GM12878 (cell line): ENCODE measurements at regions of chrX and their contacts with region 1.

Region 1: DNA sequence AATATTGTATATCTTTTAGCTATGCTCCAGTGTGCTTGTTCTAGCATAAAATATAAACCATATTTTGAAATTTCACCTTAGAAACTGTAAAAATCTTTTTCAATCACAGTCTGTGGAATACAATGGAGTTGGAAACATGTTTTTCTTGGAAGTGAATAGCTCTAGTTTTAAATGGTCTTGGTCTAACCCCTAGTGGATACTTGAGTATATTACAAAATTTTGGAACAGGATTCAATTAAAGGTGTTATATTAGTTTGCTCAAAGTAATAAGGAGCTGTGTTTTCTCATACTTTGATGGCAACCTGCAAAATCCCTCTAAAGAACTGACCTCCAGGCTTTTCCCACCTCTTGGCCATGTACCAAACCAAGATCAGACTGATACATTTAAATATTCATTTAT is 48.2 kb downstream of the STK26 start:
- DNase-seq: no peak
- ATAC-seq: peak; percentile 54
- H3K4me3 ChIP-seq: no peak overlapping the region
- H3K27ac ChIP-seq: no peak overlapping the region
- H3K4me1 ChIP-seq: no peaks in the 10 kb centered on the region
- H3K27me3 ChIP-seq: no peaks in the 10 kb centered on the region
- CTCF ChIP-seq: peak in 1 of 3 experiments; percentile 15; a peak in 2 of 6 replicates
- EP300 ChIP-seq: no peak
- POLR2A ChIP-seq: no peak
- RAD21 ChIP-seq: peak; percentile 52

Region 2: DNA sequence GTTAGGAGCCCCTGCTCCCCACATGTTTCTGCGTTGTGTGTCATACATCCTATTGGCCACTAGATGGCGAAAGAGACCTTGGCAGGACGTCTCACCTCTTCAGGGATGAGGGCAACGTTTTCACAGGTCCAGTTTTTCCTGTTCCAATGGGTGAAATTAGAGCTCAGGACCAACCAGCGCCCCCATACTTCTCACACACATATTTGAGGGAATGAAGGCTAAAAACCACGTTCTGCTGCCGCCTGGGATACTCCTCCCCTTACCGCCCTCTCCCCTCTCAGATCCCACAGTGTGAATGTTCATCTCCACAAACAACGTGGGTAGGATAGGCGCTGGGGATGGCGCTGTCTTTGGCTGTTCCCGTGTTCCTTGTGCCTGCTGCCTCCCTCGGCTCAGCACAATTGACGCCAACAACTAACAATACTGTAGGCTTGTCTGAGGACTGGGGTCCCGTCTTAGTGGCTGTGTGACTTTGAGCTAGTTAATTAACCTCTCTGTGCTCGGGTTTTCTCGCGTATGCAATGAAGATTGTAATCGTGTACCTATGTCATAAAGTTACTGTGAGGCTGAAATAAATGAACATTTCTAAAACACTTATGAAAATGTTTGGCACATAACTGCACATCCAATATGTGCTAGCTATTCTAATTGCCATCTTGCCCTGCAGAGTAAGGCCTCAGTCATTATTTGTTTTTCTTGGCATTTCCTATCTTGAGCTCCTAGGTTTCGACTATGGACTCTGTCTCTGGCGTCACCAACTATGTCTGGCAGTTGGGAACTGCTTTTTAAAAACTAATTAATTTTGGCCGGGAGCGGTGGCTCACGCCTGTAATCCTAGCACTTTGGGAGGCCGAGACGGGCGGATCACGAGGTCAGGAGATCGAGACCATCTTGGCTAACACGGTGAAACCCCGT is 229.5 kb before region 1 on chrX:
- CTCF ChIA-PET with region 1: interaction called, 11 read pairs
- POLR2A ChIA-PET with region 1: no interaction called
- RAD21 ChIA-PET with region 1: interaction called, 5 read pairs
- SMC1A ChIA-PET with region 1: interaction called, 5 read pairs
- in situ Hi-C with region 1: no loop called
- intact Hi-C with region 1: loop called (anchors 1 kb)
- DNase-seq: no peak
- ATAC-seq: peak; percentile 98
- H3K4me3 ChIP-seq: no peak overlapping the region
- H3K27ac ChIP-seq: no peak overlapping the region
- H3K4me1 ChIP-seq: no peaks in the 10 kb centered on the region
- H3K27me3 ChIP-seq: no peaks in the 10 kb centered on the region
- CTCF ChIP-seq: peak; percentile 85 to 90 (median 88)
- EP300 ChIP-seq: no peak
- POLR2A ChIP-seq: no peak
- RAD21 ChIP-seq: peak; percentile 96

Region 3: DNA sequence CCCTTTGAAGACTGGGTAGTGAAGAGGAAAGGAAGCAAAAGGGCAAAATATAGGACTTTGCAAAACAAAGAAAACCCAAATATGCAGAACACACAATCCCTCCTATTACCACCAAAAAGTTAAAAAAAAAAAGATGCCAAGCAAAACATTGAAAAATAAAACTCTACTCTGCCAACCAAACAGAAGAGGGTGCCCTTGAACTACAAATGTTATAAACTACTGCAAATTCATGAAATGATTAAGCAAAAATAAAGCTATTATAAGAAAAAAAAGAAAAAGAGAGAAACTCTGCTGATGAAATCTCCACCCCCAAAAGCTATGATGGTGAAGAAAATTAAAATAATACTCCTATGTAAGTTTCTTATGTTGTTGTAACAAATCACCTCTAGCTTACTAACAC is 216.7 kb before region 1 on chrX:
- CTCF ChIA-PET with region 1: interaction called, 5 read pairs
- POLR2A ChIA-PET with region 1: no interaction called
- RAD21 ChIA-PET with region 1: interaction called, 14 read pairs
- SMC1A ChIA-PET with region 1: interaction called, 6 read pairs
- in situ Hi-C with region 1: loop called (anchors 10 kb)
- intact Hi-C with region 1: no loop called
- DNase-seq: no peak
- ATAC-seq: no peak
- H3K4me3 ChIP-seq: no peak overlapping the region
- H3K27ac ChIP-seq: no peak overlapping the region
- H3K4me1 ChIP-seq: no peaks in the 10 kb centered on the region
- H3K27me3 ChIP-seq: no peaks in the 10 kb centered on the region
- CTCF ChIP-seq: peak; percentile 6 to 31 (median 10); a peak in 2 of 6 replicates
- EP300 ChIP-seq: no peak
- POLR2A ChIP-seq: no peak
- RAD21 ChIP-seq: peak; percentile 51

Region 4: GRCh38 chrX:132022967-132023895 is 48.0 kb before region 1 on chrX and contains the start of gene STK26:
- CTCF ChIA-PET with region 1: interaction called, 14 read pairs
- POLR2A ChIA-PET with region 1: no interaction called
- RAD21 ChIA-PET with region 1: interaction called, 6 read pairs
- SMC1A ChIA-PET with region 1: interaction called, 6 read pairs
- in situ Hi-C with region 1: no loop called
- intact Hi-C with region 1: no loop called
- DNase-seq: no peak
- ATAC-seq: peak; percentile 86
- H3K4me3 ChIP-seq: peak within 1 kb of the TSS; percentile 71
- H3K27ac ChIP-seq: peak within 1 kb of the TSS; percentile 87
- H3K4me1 ChIP-seq: no peaks in the 10 kb centered on the region
- H3K27me3 ChIP-seq: no peaks in the 10 kb centered on the region
- CTCF ChIP-seq: no peak
- EP300 ChIP-seq: no peak
- POLR2A ChIP-seq: peak; percentile 97
- RAD21 ChIP-seq: no peak
- polyA plus RNA-seq, gene STK26: 30.4 to 34.9 TPM

Region 5: GRCh38 chrX:132119821-132120515 is 48.7 kb after region 1 on chrX:
- CTCF ChIA-PET with region 1: no interaction called
- POLR2A ChIA-PET with region 1: no interaction called
- RAD21 ChIA-PET with region 1: no interaction called
- SMC1A ChIA-PET with region 1: no interaction called
- in situ Hi-C with region 1: no loop called
- intact Hi-C with region 1: loop called (anchors 5 kb)
- DNase-seq: no peak
- ATAC-seq: no peak
- H3K4me3 ChIP-seq: no peak overlapping the region
- H3K27ac ChIP-seq: no peak overlapping the region
- H3K4me1 ChIP-seq: no peaks in the 10 kb centered on the region
- H3K27me3 ChIP-seq: no peaks in the 10 kb centered on the region
- CTCF ChIP-seq: no peak
- EP300 ChIP-seq: no peak
- POLR2A ChIP-seq: no peak
- RAD21 ChIP-seq: no peak